ENCODE measurements at regions of chr12 and their contacts with region 1.

Region 1: GRCh38 chr12:9108504-9109212 is 7.1 kb downstream of the A2M start:
- DNase-seq: no peak
- ATAC-seq: peak in 1 of 4 donors; percentile 38
- H3K4me3 ChIP-seq: no peak overlapping the region
- H3K27ac ChIP-seq: no peak overlapping the region
- H3K4me1 ChIP-seq: peaks cover 0 to 59% (median 20%) of the 10 kb centered on the region in 12 donors
- H3K27me3 ChIP-seq: no peaks in the 10 kb centered on the region
- CTCF ChIP-seq: no peak
- POLR2A ChIP-seq: no peak

Region 2: DNA sequence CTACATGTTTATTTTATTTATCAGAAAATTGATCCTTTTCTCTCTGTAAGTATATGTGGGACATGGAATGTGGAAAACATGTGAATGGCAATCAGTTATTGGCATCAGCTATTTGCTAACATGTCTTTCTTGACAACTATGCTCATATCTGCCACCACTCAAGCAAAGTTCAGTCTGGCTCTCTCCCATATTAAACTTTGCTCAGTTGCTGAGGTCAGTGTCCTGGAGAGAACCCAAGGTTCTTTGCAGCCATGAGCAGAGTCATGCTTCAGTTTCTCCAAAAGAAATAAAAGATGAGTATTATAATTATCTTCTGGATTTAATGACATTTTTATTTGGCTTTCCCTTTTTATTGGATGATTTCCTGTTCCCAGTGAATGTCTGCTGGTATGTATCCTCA is 35.6 kb before region 1 on chr12:
- intact Hi-C with region 1: loop called in 5 of 10 experiments (anchors 2 to 5 kb)
- DNase-seq: no peak
- ATAC-seq: peak in 3 of 4 donors; percentile 73 to 78 (median 74)
- H3K4me3 ChIP-seq: no peak overlapping the region
- H3K27ac ChIP-seq: peak overlapping the region in 3 of 12 donors; percentile 2 to 18 (median 12)
- H3K4me1 ChIP-seq: peaks cover 0 to 11% (median 0%) of the 10 kb centered on the region in 12 donors
- H3K27me3 ChIP-seq: no peaks in the 10 kb centered on the region
- CTCF ChIP-seq: no peak
- POLR2A ChIP-seq: no peak

Measured in heart left ventricle (tissue), 16 donors.